ENCODE measurements at regions of chr9 and their contacts with region 1.

Region 1: DNA sequence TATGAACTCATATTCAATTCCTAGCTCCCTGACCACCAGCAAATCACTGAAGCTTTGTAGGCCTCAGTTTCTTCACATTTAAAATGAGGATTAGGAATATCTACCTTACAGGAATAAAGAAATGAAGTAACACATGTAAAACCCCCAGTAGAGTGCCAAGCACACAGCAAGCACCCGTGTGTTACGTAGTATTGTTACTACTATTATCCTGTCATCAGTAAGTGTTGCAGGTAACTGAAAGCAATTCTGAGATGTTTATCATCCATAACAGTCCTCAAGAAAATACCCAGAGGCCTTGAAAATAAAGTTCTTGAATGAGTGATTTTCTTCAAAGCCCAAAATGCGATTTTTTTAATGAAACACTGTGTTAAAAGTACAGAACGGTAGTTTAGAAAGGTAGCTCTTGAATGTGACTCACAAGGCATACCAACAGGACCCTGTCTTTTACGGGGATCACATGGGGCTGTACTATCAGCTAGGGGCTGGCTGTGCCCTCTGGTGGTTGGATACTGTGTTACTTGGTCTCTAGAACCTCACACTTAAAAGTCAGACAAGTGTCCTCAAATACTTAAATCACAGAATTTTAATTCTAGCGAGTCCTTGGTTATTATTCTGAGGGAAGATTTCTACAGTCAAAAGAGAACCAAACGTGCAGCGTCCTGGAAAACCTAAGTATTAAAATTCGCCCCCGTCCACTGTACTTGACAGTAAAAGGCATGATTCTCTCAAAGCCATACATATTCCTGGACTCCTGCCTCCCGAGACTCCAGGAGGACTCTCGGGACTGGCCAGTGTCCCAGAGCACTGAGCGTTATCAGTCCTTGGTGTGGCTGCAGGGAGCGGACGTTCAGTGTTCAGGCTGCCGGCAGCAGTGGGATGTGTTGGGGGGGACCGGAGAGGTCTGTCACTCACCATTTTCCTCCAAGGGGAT is 725 bp downstream of the NDUFB6 start:
- DNase-seq: peak; percentile 90 to 96 (median 95)
- H3K4me3 ChIP-seq: peak overlapping the region; percentile 88 to 100 (median 100)
- H3K27ac ChIP-seq: peak overlapping the region; percentile 81 to 89
- H3K4me1 ChIP-seq: peaks cover 13 to 34% (median 17%) of the 10 kb centered on the region in 4 experiments
- H3K27me3 ChIP-seq: no peaks in the 10 kb centered on the region

Region 2: DNA sequence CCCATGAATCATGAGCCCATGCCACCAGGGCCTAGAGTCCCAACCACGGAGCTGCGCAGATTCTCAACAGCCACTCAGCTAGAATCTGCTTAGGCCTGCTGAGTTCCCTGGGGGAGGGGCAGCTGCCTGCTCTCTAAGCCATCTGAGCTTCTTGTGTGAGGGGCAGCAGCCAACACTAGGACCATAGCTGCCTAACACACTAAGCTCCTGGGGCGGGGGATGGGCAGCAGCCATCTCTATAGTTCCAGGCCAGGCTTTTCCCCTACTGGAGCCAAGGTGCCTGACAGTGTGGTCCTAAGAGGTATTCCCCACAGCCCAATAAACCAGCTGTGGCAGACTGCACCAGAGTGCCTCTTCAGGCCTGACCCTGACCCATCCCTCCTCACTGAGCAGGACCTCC is 443.7 kb before region 1 on chr9:
- CTCF ChIA-PET with region 1: no interaction called
- POLR2A ChIA-PET with region 1: no interaction called
- DNase-seq: no peak
- H3K4me3 ChIP-seq: peak overlapping the region in 1 of 7 experiments; percentile 12
- H3K27ac ChIP-seq: no peak overlapping the region
- H3K4me1 ChIP-seq: no peaks in the 10 kb centered on the region
- H3K27me3 ChIP-seq: no peaks in the 10 kb centered on the region

Region 3: GRCh38 chr9:32384364-32385151 is 187.7 kb before region 1 on chr9 and contains the start of gene ACO1:
- CTCF ChIA-PET with region 1: interaction called, 257 read pairs
- POLR2A ChIA-PET with region 1: interaction called, 3 read pairs
- DNase-seq: peak; percentile 79 to 84 (median 81)
- H3K4me3 ChIP-seq: peak within 1 kb of the TSS; percentile 72 to 98 (median 89)
- H3K27ac ChIP-seq: peak within 1 kb of the TSS in 1 of 2 experiments; percentile 43
- H3K4me1 ChIP-seq: peaks cover 3 to 24% (median 14%) of the 10 kb centered on the region in 4 experiments
- H3K27me3 ChIP-seq: peaks cover 4 to 14% (median 9%) of the 10 kb centered on the region in 5 experiments

Region 4: GRCh38 chr9:32526041-32526706 is 46.1 kb before region 1 on chr9 and contains the start of gene RIGI:
- CTCF ChIA-PET with region 1: interaction called, 20 read pairs
- POLR2A ChIA-PET with region 1: interaction called, 3 read pairs
- DNase-seq: peak; percentile 88 to 90 (median 90)
- H3K4me3 ChIP-seq: peak within 1 kb of the TSS; percentile 81 to 98 (median 95)
- H3K27ac ChIP-seq: peak within 1 kb of the TSS; percentile 61 to 83
- H3K4me1 ChIP-seq: peaks cover 7 to 18% (median 13%) of the 10 kb centered on the region in 4 experiments
- H3K27me3 ChIP-seq: no peaks in the 10 kb centered on the region

Region 5: DNA sequence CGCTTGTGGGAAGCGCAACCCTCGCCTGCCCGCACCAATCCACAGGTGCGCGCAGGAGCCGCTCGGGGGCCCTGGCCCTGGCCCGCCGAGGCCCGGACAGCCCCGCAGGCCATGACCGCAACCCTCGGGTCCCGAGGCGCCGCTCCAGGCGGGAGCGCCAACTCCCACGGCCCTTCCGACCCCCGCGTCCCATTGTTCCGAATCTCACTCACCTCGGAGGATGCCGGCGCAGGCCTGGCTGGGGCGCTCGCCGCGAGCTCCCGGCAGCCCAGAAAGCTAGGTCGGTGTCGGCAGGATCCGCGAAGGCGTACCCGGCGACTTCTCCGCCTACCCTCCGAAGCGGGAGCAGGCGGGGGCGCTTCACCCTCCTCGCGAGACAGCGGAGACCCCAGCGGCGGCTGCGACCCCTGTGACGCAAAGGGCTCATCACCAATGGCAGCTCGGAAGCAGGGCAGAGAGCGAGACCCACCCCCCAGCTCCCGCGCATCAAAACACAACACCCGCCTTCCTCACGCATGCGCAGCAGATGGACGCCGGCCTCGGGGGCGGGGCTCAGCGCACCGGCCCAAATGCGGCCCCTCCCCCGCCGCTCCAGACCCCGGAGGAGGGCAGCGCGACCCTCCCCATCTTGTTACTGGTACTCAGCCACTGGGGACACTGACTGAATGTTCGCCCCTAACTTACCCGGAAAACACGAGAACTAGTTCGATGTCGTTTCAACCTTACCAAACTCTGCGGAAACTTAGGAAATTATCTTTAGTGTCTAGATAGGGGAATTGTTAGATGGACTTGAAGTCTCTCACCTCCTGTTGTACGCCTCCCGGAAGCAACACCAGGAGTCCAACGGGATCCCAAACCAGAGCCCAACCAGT is 21.4 kb before region 1 on chr9:
- CTCF ChIA-PET with region 1: interaction called, 73 read pairs
- POLR2A ChIA-PET with region 1: interaction called, 12 read pairs
- DNase-seq: peak; percentile 97 to 99 (median 99)
- H3K4me3 ChIP-seq: peak overlapping the region; percentile 89 to 98 (median 91)
- H3K27ac ChIP-seq: peak overlapping the region; percentile 93 to 98
- H3K4me1 ChIP-seq: peaks cover 31 to 55% (median 36%) of the 10 kb centered on the region in 4 experiments
- H3K27me3 ChIP-seq: no peaks in the 10 kb centered on the region

Measured in common myeloid progenitor, CD34-positive (primary cell).